Adrenal gland (tissue), 19 donors: ENCODE measurements at regions of chr12 and their contacts with region 1.

Region 1: DNA sequence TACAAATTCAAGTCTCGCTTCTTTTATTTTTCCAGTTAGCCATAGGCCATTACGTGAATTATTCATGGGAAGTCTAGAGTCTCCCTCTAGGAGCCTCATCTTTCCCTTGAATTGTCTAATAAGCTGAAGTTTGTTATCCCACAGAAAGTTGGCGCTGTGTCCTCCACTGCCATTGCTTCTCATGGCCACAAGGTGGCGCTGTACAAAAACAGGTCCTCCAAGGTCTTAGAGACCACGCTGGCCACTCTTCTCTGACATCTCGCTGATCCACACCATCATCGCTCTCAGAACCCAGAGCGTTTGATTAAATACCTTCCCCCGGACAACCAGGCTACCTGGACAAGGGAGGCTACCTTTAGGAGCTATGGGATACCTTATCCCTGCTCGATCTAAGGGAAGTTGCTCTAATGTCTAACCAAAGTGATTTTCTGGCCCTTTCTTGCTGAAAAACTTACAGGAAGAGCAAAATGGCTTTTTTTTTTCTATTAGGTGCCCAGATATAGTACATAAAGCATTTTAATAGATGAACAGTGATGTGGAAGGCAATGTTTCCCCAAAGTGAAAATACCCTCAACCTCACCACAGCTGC is 110.0 kb downstream of the CCDC60 start:
- DNase-seq: peak; percentile 22 to 74 (median 60)
- H3K4me3 ChIP-seq: no peak overlapping the region
- H3K27ac ChIP-seq: no peak overlapping the region
- H3K4me1 ChIP-seq: no peaks in the 10 kb centered on the region
- H3K27me3 ChIP-seq: peaks cover 4% of the 10 kb centered on the region
- CTCF ChIP-seq: peak; percentile 70 to 91 (median 83)
- POLR2A ChIP-seq: no peak

Region 2: DNA sequence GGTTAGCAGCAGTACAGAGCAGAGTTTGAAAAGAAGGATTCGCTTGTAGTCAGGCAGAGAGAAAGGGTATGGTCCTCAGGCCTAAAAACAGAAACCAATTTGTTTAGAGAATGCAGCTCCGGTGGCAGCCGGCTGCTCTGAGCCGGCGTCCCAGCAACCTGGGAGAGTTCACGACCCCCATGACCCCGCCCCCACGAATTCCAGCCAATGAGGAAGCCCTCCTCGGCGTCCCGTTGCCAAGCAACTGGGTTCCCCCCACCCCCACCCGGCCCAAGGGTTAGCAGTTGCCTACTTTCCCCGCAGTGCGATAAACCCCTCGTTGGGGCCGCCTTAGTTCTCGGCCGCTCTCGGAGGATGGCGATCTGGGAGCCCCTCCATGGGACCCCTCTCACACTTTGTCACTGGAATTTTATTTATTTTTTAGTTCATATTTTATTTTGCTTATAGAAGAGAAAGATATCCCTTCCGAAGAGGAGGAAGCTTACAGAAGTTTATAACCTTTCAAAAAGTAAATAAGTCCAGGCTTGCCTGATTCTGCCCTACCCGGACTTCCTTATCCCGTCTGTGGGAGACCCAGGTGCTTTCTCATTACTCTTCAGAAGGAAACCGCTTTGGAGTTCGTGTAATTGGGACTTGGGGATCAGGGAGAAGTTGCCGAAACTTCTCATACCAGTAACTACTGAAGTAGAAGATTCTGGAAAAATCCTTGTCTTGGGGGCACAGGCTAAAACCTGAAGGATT is 110.0 kb before region 1 on chr12 and contains the start of gene CCDC60:
- intact Hi-C with region 1: no loop called
- DNase-seq: peak in 1 of 7 donors; percentile 1
- H3K4me3 ChIP-seq: no peak within 1 kb of the TSS
- H3K27ac ChIP-seq: no peak within 1 kb of the TSS
- H3K4me1 ChIP-seq: no peaks in the 10 kb centered on the region
- H3K27me3 ChIP-seq: peaks cover 7% of the 10 kb centered on the region
- CTCF ChIP-seq: no peak
- POLR2A ChIP-seq: no peak
- total RNA-seq, gene CCDC60: not detected

Region 3: GRCh38 chr12:119544765-119545625 is 100.4 kb after region 1 on chr12:
- intact Hi-C with region 1: loop called in 1 of 2 experiments (anchors 10 kb)
- DNase-seq: peak; percentile 53 to 82 (median 69)
- H3K4me3 ChIP-seq: no peak overlapping the region
- H3K27ac ChIP-seq: no peak overlapping the region
- H3K4me1 ChIP-seq: no peaks in the 10 kb centered on the region
- H3K27me3 ChIP-seq: no peaks in the 10 kb centered on the region
- CTCF ChIP-seq: peak; percentile 76 to 89 (median 84)
- POLR2A ChIP-seq: no peak

Region 4: GRCh38 chr12:119649202-119649808 is 204.8 kb after region 1 on chr12:
- intact Hi-C with region 1: loop called in 1 of 2 experiments (anchors 10 kb)
- DNase-seq: no peak
- H3K4me3 ChIP-seq: no peak overlapping the region
- H3K27ac ChIP-seq: no peak overlapping the region
- H3K4me1 ChIP-seq: no peaks in the 10 kb centered on the region
- H3K27me3 ChIP-seq: no peaks in the 10 kb centered on the region
- CTCF ChIP-seq: peak; percentile 43 to 77 (median 66)
- POLR2A ChIP-seq: no peak